Activated CD4-positive, alpha-beta T cell treated with anti-CD3 and anti-CD28 coated beads, Interleukin-2, amount 10 ng/mL, durations not matched to agents 24 days and 14 days (primary cell): ENCODE measurements at regions of chr7 and their contacts with region 1.

Region 1: DNA sequence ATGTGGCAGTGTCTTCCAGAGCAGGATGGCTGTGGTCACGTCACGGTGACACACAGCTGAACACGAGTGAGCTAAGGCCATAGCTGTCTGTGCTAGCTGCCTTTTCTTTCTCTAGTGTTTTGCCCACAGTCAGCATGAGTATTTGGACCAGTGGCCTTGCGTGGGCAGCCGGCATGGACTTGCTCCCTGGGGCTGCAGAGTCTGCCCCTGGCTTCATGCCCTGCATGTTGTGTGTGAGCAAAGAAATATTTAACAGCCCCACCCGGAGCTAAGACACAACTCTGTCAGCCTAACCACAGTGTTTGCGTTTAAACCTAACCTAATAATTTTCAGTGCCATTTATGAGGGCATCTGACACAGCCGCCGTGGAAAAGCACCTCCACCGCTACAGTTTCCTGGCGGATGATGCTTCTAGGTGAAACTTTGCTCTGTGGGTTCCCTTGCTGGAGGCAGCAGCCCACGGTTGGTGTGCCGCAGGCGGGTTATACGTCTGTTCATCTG is 14.6 kb downstream of the CHST12 start:
- DNase-seq: peak; percentile 77
- H3K4me3 Mint-ChIP-seq: peak overlapping the region; percentile 14
- H3K27ac Mint-ChIP-seq: no peak overlapping the region
- H3K4me1 Mint-ChIP-seq: peaks cover 32% of the 10 kb centered on the region
- H3K27me3 Mint-ChIP-seq: no peaks in the 10 kb centered on the region

Region 2: GRCh38 chr7:2403014-2403717 is 14.9 kb before region 1 on chr7 and contains the start of gene CHST12:
- intact Hi-C with region 1: loop called (anchors 1 kb)
- DNase-seq: peak; percentile 99
- H3K4me3 Mint-ChIP-seq: peak within 1 kb of the TSS; percentile 91
- H3K27ac Mint-ChIP-seq: peak within 1 kb of the TSS; percentile 85
- H3K4me1 Mint-ChIP-seq: peaks cover 47% of the 10 kb centered on the region
- H3K27me3 Mint-ChIP-seq: no peaks in the 10 kb centered on the region
- total RNA-seq, gene CHST12: 5.8 and 6.4 TPM in 2 replicates

Region 3: GRCh38 chr7:2465928-2466327 is 47.9 kb after region 1 on chr7:
- intact Hi-C with region 1: no loop called
- DNase-seq: no peak
- H3K4me3 Mint-ChIP-seq: no peak overlapping the region
- H3K27ac Mint-ChIP-seq: no peak overlapping the region
- H3K4me1 Mint-ChIP-seq: peaks cover 2% of the 10 kb centered on the region
- H3K27me3 Mint-ChIP-seq: peaks cover 17% of the 10 kb centered on the region